ENCODE measurements at regions of chr14 and their contacts with region 1.

Region 1: DNA sequence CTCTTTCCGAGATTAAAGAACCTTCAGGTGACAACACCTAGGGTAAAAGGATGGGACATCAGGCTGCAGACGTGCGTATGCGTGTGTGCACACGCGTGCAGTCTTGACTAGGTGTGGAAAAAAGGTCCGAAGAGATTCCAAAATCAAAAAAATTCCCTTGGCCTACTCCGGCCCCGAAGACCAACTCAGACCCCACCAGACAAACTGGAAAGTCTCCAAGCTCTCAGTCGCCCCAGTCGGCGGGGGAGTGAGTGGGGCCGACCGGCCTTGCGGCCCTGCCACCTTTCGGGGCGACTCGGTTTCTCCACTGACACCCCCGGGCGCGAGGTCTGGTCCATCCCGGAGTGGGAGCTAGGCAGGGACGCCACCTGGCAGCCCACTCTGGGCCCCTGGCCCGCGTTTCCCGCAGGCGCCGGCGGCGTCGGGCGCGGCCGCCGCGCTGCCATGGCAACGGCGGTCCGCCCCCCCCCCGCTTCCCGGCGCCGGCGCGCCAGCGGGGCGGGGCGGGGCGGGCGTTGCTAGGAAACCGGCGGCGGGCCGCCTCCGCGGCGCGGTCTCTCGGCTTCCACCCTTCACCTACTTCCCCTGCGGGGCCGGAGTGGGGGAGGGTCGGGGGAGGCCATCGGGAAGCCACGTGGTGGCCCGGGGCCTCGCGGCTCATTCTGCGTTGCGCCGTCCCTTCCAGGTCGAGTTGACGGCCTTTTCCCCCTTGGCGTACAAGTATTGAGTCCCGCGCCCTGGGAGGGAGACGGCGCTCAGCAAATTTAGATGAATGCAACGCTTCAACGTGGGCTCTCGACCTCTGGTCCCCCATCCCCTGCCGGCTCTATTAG is 253.1 kb downstream of the EFCAB11 start:
- DNase-seq: peak; percentile 94 to 95
- ATAC-seq: peak; percentile 95
- H3K4me3 ChIP-seq: peak overlapping the region; percentile 5 to 11
- H3K27ac ChIP-seq: peak overlapping the region in 1 of 2 donors; percentile 31
- H3K4me1 ChIP-seq: no peaks in the 10 kb centered on the region
- H3K27me3 ChIP-seq: no peaks in the 10 kb centered on the region

Region 2: GRCh38 chr14:89855961-89856656 is 154.7 kb after region 1 on chr14:
- intact Hi-C with region 1: loop called in 1 of 2 experiments (anchors 10 kb)
- DNase-seq: no peak
- ATAC-seq: no peak
- H3K4me3 ChIP-seq: no peak overlapping the region
- H3K27ac ChIP-seq: no peak overlapping the region
- H3K4me1 ChIP-seq: no peaks in the 10 kb centered on the region
- H3K27me3 ChIP-seq: no peaks in the 10 kb centered on the region